PC-3 (cell line): ENCODE measurements at regions of chr5 and their contacts with region 1.

Region 1: GRCh38 chr5:90434116-90434714 is 24.7 kb upstream of the CETN3 start:
- DNase-seq: peak; percentile 76
- ATAC-seq: peak; percentile 97
- H3K4me3 ChIP-seq: no peak overlapping the region
- H3K27ac ChIP-seq: no peak overlapping the region
- H3K4me1 ChIP-seq: no peaks in the 10 kb centered on the region
- H3K27me3 ChIP-seq: no peaks in the 10 kb centered on the region
- CTCF ChIP-seq: peak; percentile 96

Region 2: DNA sequence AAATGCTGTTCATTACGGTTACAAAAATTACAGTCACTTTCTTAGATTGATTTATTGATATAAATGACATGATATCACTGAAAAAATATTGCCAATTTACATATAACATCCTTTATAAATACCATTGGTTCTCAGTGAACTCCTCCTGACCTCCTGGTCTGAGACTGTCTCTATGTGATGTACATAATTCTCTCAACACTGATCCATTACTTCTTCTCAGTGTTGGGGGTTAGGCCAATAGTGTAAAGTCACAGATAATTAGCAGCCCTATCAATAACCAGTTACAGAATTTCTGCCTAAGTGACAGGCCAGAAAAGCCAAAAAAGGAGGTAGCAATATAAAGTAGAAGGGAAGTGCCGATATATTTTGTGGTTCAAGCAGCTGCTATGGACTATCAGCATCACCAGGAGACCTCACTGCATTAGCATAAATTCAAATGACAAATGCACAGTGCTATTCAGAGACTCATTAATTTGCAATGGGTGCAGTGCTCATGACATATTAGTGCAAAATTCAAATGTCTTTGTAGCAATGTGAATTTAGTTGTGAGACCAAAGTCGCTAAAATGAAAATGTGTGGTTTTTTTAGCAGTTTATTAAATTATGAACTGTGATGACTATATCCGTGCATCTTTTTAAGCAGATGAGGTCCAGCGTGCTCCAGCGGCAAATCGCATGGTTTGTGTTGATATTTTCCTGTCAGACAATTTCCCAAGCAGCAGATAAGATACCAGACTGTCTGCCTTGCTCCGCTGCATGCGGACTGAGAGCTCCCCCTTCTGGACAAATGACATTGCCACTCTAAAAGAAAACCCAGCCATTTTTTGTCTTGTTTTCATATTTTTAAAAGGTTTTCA is 169.3 kb before region 1 on chr5:
- CTCF ChIA-PET with region 1: no interaction called
- POLR2A ChIA-PET with region 1: no interaction called
- intact Hi-C with region 1: loop called (anchors 2 kb)
- DNase-seq: peak; percentile 82
- ATAC-seq: peak; percentile 84
- H3K4me3 ChIP-seq: no peak overlapping the region
- H3K27ac ChIP-seq: no peak overlapping the region
- H3K4me1 ChIP-seq: no peaks in the 10 kb centered on the region
- H3K27me3 ChIP-seq: no peaks in the 10 kb centered on the region
- CTCF ChIP-seq: peak; percentile 99

Region 3: GRCh38 chr5:90308787-90309553 is 125.2 kb before region 1 on chr5:
- CTCF ChIA-PET with region 1: interaction called, 10 read pairs
- POLR2A ChIA-PET with region 1: no interaction called
- intact Hi-C with region 1: no loop called
- DNase-seq: peak; percentile 69
- ATAC-seq: peak; percentile 87
- H3K4me3 ChIP-seq: no peak overlapping the region
- H3K27ac ChIP-seq: no peak overlapping the region
- H3K4me1 ChIP-seq: peaks cover 14% of the 10 kb centered on the region
- H3K27me3 ChIP-seq: no peaks in the 10 kb centered on the region
- CTCF ChIP-seq: no peak; the same call in 1 of the 2 replicates

Region 4: GRCh38 chr5:90421136-90421535 is 13.1 kb before region 1 on chr5:
- CTCF ChIA-PET with region 1: no interaction called
- POLR2A ChIA-PET with region 1: no interaction called
- intact Hi-C with region 1: loop called (anchors 2 kb)
- DNase-seq: peak; percentile 32
- ATAC-seq: peak; percentile 76
- H3K4me3 ChIP-seq: no peak overlapping the region
- H3K27ac ChIP-seq: no peak overlapping the region
- H3K4me1 ChIP-seq: no peaks in the 10 kb centered on the region
- H3K27me3 ChIP-seq: no peaks in the 10 kb centered on the region
- CTCF ChIP-seq: peak; percentile 50

Region 5: GRCh38 chr5:90474235-90475109 is 40.3 kb after region 1 on chr5 and contains the starts of genes MBLAC2 and POLR3G:
- CTCF ChIA-PET with region 1: no interaction called
- POLR2A ChIA-PET with region 1: no interaction called
- intact Hi-C with region 1: loop called (anchors 2 kb)
- DNase-seq: peak; percentile 95
- ATAC-seq: peak; percentile 76
- H3K4me3 ChIP-seq: peak within 1 kb of the TSS; percentile 94
- H3K27ac ChIP-seq: peak within 1 kb of the TSS; percentile 68
- H3K4me1 ChIP-seq: peaks cover 29% of the 10 kb centered on the region
- H3K27me3 ChIP-seq: no peaks in the 10 kb centered on the region
- CTCF ChIP-seq: peak; percentile 48
- total RNA-seq, gene MBLAC2: 7.8 and 12.4 TPM in 2 replicates
- total RNA-seq, gene POLR3G: 34.6 and 42.2 TPM in 2 replicates

Region 6: GRCh38 chr5:90606539-90606938 is 172.3 kb after region 1 on chr5:
- CTCF ChIA-PET with region 1: interaction called, 21 read pairs
- POLR2A ChIA-PET with region 1: no interaction called
- intact Hi-C with region 1: loop called (anchors 1 kb)
- DNase-seq: peak; percentile 53
- ATAC-seq: peak; percentile 45; the same call in 1 of the 2 replicates
- H3K4me3 ChIP-seq: no peak overlapping the region
- H3K27ac ChIP-seq: no peak overlapping the region
- H3K4me1 ChIP-seq: peaks cover 11% of the 10 kb centered on the region
- H3K27me3 ChIP-seq: no peaks in the 10 kb centered on the region
- CTCF ChIP-seq: peak; percentile 86

Region 7: GRCh38 chr5:90783460-90784333 is 349.5 kb after region 1 on chr5:
- CTCF ChIA-PET with region 1: interaction called, 6 read pairs
- POLR2A ChIA-PET with region 1: no interaction called
- intact Hi-C with region 1: loop called (anchors 1 kb)
- DNase-seq: peak; percentile 89
- ATAC-seq: peak; percentile 98
- H3K4me3 ChIP-seq: no peak overlapping the region
- H3K27ac ChIP-seq: no peak overlapping the region
- H3K4me1 ChIP-seq: no peaks in the 10 kb centered on the region
- H3K27me3 ChIP-seq: no peaks in the 10 kb centered on the region
- CTCF ChIP-seq: peak; percentile 98